AG04450 (cell line): ENCODE measurements at regions of chr19 and their contacts with region 1.

Region 1: GRCh38 chr19:51607920-51608562 is 22.2 kb downstream of the SIGLEC5 start:
- DNase-seq: peak; percentile 38
- H3K4me3 ChIP-seq: no peak overlapping the region
- H3K27ac ChIP-seq: no peak overlapping the region
- H3K27me3 ChIP-seq: peaks cover 4% of the 10 kb centered on the region
- CTCF ChIP-seq: peak; percentile 84

Region 2: GRCh38 chr19:51590441-51590840 is 17.6 kb before region 1 on chr19:
- CTCF ChIA-PET with region 1: no interaction called
- POLR2A ChIA-PET with region 1: no interaction called
- DNase-seq: no peak
- H3K4me3 ChIP-seq: no peak overlapping the region
- H3K27ac ChIP-seq: no peak overlapping the region
- H3K27me3 ChIP-seq: no peaks in the 10 kb centered on the region
- CTCF ChIP-seq: no peak

Region 3: DNA sequence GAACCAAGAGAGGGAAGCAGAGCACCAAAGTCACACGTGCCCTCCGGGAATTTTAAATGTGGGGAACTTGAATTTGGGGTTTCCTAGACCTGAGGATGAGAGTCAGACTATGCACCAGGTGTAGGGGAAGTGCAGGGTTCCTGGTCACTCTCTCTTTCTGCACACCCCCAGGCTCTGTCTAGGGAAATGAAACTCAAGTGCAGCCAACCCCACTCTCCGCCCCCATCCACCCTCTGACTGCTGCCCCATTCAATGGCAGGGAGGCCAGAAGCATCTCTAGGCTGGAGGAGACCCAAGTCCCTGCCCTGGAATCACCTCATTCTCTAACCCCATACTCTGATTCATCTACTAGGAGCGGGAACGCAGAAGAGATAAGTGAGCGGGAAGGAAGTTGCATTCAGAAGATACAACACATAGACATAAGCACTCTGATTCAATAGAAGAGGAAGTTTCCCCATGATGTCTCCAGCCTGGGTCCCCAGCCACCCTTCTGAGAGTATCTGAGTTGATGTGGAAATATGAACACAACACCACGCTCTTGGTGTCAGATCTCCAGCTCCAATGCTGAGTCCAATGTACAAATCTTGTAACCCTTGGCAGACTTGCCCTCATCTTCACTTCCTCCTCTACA is 43.3 kb after region 1 on chr19:
- CTCF ChIA-PET with region 1: interaction called, 11 read pairs
- POLR2A ChIA-PET with region 1: no interaction called
- DNase-seq: no peak
- H3K4me3 ChIP-seq: no peak overlapping the region
- H3K27ac ChIP-seq: no peak overlapping the region
- H3K27me3 ChIP-seq: no peaks in the 10 kb centered on the region
- CTCF ChIP-seq: no peak

Region 4: DNA sequence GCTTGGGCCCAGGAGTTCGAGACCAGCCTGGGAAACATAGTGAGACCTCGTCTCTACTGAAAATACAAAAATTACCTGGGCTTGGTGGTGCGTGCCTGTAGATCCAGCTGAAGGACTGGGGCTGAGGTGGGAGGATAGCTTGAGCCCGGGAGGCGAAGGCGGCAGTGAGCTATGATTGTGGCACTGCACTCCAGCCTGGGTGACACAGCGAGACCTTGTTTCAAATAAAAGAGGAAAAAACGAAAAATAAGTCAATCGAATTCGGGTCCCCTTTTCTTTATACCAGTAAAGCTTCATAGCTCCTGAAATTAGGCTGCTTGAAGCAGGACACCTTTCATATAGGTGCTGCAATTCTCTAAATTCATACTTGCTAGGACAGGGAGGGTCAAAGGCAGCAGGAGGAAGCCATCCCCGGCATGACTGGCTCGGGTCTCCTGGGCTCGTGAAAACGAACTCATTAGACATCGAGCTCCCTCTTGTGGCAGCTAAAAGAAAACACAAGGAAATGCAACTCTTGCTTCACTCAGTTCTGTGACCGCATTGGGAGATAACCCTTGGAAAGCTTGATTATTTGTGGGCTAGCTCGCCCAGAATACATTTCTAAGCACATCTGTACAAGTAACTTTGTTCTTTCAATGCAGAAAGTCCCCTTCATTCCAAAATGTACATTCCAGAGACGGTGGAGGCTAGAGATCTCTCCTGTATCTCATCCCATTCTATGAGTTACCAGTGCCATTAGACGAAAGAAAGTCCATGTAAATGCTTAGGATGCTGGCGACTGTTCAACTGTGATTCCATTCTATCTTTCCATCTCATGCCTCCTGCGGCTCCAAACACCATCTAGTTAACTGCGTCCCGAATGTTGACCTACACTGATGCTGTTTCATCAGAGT is 169.8 kb after region 1 on chr19:
- CTCF ChIA-PET with region 1: interaction called, 18 read pairs
- POLR2A ChIA-PET with region 1: no interaction called
- DNase-seq: peak; percentile 63
- H3K4me3 ChIP-seq: no peak overlapping the region
- H3K27ac ChIP-seq: no peak overlapping the region
- H3K27me3 ChIP-seq: no peaks in the 10 kb centered on the region
- CTCF ChIP-seq: peak; percentile 76